IMR-90 (cell line): ENCODE measurements at regions of chr4 and their contacts with region 1.

Region 1: DNA sequence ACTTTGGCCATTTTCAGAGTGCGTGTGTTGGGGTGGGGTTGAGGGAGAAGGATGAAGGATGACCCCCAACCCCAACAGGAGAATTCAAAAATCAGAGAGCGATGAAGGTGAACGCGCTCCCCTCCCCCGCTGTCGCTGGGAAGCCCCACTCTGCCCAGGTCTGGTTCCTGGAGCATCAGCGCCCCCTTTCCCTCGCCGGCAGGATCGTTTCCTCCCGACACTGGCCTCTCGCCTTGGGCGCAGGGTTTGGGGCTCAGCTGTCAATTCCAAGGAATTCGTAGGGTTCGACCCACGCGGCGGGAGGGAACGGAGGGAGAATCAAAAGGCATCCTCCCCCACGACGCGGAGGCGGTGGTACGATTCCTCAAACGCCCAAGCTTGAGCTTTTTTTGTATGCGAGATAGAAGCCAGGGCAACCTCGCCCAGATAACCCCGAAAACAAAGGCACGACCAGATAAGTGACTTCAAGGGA is 1.0 kb upstream of the PDGFRA start:
- DNase-seq: peak; percentile 82
- ATAC-seq: peak; percentile 48
- H3K4me3 ChIP-seq: peak overlapping the region; percentile 89
- H3K27ac ChIP-seq: peak overlapping the region; percentile 83
- H3K4me1 ChIP-seq: peaks cover 15% of the 10 kb centered on the region
- H3K27me3 ChIP-seq: no peaks in the 10 kb centered on the region
- CTCF ChIP-seq: peak; percentile 95
- POLR2A ChIP-seq: peak; percentile 26; the same call in 1 of the 2 replicates
- RAD21 ChIP-seq: peak; percentile 97

Region 2: DNA sequence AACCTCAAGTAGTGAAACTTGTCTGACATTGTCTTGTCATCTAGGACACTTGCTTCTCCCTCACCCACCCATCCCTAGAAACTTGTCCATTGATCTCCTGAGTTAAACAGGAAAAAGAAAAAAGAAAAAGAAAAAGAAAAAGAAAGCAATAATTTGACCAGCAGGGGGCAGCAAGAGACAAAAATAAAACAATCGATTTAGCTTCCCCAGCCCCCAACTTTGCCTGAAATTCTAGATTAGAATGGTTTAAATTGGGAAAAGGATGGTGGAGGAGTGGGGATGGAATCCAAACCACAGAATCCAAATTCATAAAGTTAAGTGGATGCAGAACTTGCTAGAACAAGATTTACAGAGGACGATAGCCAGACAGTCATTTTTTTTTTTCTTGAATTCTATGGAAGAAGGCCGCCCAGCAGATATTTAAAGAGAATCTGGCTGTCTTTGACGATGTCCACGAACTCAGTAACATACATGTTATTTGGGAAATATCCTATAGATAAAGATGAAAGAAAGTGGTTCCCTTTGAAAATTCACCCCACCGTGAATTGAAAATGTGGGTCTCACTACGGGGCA is 1851.9 kb before region 1 on chr4:
- CTCF ChIA-PET with region 1: no interaction called
- POLR2A ChIA-PET with region 1: no interaction called
- dilution Hi-C with region 1: no loop called
- in situ Hi-C with region 1: loop called (anchors 10 kb)
- intact Hi-C with region 1: no loop called
- DNase-seq: peak; percentile 47
- ATAC-seq: peak; percentile 48
- H3K4me3 ChIP-seq: no peak overlapping the region
- H3K27ac ChIP-seq: no peak overlapping the region
- H3K4me1 ChIP-seq: no peaks in the 10 kb centered on the region
- H3K27me3 ChIP-seq: peaks cover 9% of the 10 kb centered on the region
- CTCF ChIP-seq: peak; percentile 66
- POLR2A ChIP-seq: no peak
- RAD21 ChIP-seq: peak; percentile 69

Region 3: GRCh38 chr4:53196882-53197771 is 1031.0 kb before region 1 on chr4:
- CTCF ChIA-PET with region 1: no interaction called
- POLR2A ChIA-PET with region 1: no interaction called
- dilution Hi-C with region 1: no loop called
- in situ Hi-C with region 1: no loop called
- intact Hi-C with region 1: loop called (anchors 1 kb)
- DNase-seq: peak; percentile 90
- ATAC-seq: peak; percentile 82
- H3K4me3 ChIP-seq: peak overlapping the region; percentile 22; the same call in 1 of the 2 replicates
- H3K27ac ChIP-seq: peak overlapping the region; percentile 56; the same call in 1 of the 2 replicates
- H3K4me1 ChIP-seq: no peaks in the 10 kb centered on the region
- H3K27me3 ChIP-seq: no peaks in the 10 kb centered on the region
- CTCF ChIP-seq: peak; percentile 80
- POLR2A ChIP-seq: no peak
- RAD21 ChIP-seq: peak; percentile 85

Region 4: DNA sequence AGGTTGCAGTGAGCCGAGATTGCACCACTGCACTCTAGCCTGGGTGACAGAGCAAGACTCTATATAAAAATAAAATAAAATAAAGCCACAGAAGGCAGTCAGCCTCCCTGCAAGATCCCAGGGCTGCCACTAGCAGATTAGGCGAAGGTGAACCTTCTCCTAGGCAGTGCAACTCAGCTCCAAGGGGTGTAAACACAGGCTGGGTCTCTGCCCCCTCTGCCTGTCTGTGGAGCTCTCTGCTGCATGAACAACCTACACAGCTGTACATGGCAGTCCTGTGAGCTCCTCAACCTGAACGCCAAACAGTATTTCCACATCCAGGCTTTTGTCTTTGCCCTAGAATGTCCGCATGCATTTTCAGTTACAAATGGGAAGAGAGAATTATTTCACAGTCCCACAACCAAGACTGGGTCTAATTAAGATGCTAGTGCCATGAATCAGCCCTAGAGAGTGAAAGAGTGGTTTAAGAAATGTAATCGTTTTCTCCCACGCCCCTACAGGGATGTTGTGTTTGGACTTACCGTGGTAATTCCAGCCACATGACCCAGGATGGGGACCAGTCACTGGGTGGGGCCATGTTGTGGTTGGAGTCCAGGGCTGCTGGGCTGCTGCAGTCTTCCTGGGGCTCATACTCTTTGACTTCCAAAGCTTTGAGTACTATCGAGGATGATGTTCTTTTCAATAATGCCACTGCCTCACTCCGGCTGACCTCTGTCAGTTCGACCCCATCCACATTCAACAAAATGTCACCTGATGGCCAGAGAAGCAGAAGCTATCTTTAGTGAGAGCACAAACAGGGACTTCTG is 751.7 kb before region 1 on chr4:
- CTCF ChIA-PET with region 1: no interaction called
- POLR2A ChIA-PET with region 1: no interaction called
- dilution Hi-C with region 1: no loop called
- in situ Hi-C with region 1: no loop called
- intact Hi-C with region 1: loop called (anchors 5 kb)
- DNase-seq: peak; percentile 98
- ATAC-seq: peak; percentile 87
- H3K4me3 ChIP-seq: no peak overlapping the region
- H3K27ac ChIP-seq: peak overlapping the region; percentile 93
- H3K4me1 ChIP-seq: peaks cover 20% of the 10 kb centered on the region
- H3K27me3 ChIP-seq: no peaks in the 10 kb centered on the region
- CTCF ChIP-seq: no peak
- POLR2A ChIP-seq: no peak
- RAD21 ChIP-seq: no peak

Region 5: GRCh38 chr4:53702334-53703266 is 525.5 kb before region 1 on chr4:
- CTCF ChIA-PET with region 1: interaction called, 3 read pairs
- POLR2A ChIA-PET with region 1: interaction called, 4 read pairs
- dilution Hi-C with region 1: no loop called
- in situ Hi-C with region 1: loop called (anchors 5 kb)
- intact Hi-C with region 1: loop called (anchors 1 kb)
- DNase-seq: peak; percentile 77
- ATAC-seq: peak; percentile 83
- H3K4me3 ChIP-seq: no peak overlapping the region
- H3K27ac ChIP-seq: peak overlapping the region; percentile 86
- H3K4me1 ChIP-seq: peaks cover 22% of the 10 kb centered on the region
- H3K27me3 ChIP-seq: no peaks in the 10 kb centered on the region
- CTCF ChIP-seq: 0 out of 2 replicates have a peak, but pooled peaks have one; percentile 10
- POLR2A ChIP-seq: no peak
- RAD21 ChIP-seq: peak; percentile 4; the same call in 1 of the 2 replicates

Region 6: GRCh38 chr4:53908661-53909078 is 319.4 kb before region 1 on chr4:
- CTCF ChIA-PET with region 1: interaction called, 13 read pairs
- POLR2A ChIA-PET with region 1: interaction called, 8 read pairs
- dilution Hi-C with region 1: no loop called
- in situ Hi-C with region 1: loop called (anchors 5 kb)
- intact Hi-C with region 1: loop called (anchors 1 kb)
- DNase-seq: peak; percentile 97
- ATAC-seq: peak; percentile 70
- H3K4me3 ChIP-seq: peak overlapping the region; percentile 22; the same call in 1 of the 2 replicates
- H3K27ac ChIP-seq: peak overlapping the region; percentile 96
- H3K4me1 ChIP-seq: peaks cover 11% of the 10 kb centered on the region
- H3K27me3 ChIP-seq: no peaks in the 10 kb centered on the region
- CTCF ChIP-seq: peak; percentile 95
- POLR2A ChIP-seq: peak; percentile 48; the same call in 1 of the 2 replicates
- RAD21 ChIP-seq: peak; percentile 93

Region 7: GRCh38 chr4:54041100-54041499 is 187.0 kb before region 1 on chr4:
- CTCF ChIA-PET with region 1: no interaction called
- POLR2A ChIA-PET with region 1: no interaction called
- dilution Hi-C with region 1: no loop called
- in situ Hi-C with region 1: no loop called
- intact Hi-C with region 1: no loop called
- DNase-seq: no peak
- ATAC-seq: no peak
- H3K4me3 ChIP-seq: no peak overlapping the region
- H3K27ac ChIP-seq: no peak overlapping the region
- H3K4me1 ChIP-seq: 0 out of 2 replicates have a peak, but pooled peaks cover 2% of the 10 kb centered on the region
- H3K27me3 ChIP-seq: no peaks in the 10 kb centered on the region
- CTCF ChIP-seq: no peak
- POLR2A ChIP-seq: no peak
- RAD21 ChIP-seq: no peak

Region 8: DNA sequence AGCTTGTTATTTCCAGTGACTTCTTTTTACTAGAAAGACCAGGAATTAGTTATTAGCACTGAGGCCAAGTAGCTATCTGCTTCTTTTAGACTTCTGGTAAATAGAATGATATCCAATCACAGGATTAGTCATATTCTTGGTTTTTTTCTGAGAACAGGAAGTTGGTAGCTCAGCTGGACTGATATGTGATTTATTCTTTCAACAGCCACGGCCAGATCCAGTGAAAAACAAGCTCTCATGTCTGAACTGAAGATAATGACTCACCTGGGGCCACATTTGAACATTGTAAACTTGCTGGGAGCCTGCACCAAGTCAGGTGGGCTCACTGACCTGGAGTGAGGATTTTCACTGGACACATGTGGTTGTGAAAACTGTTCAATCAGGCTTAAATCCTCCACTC is 49.6 kb after region 1 on chr4:
- CTCF ChIA-PET with region 1: no interaction called
- POLR2A ChIA-PET with region 1: no interaction called
- dilution Hi-C with region 1: no loop called
- in situ Hi-C with region 1: no loop called
- intact Hi-C with region 1: no loop called
- DNase-seq: peak; percentile 92
- ATAC-seq: peak; percentile 25
- H3K4me3 ChIP-seq: no peak overlapping the region
- H3K27ac ChIP-seq: peak overlapping the region; percentile 60
- H3K4me1 ChIP-seq: peaks cover 17% of the 10 kb centered on the region
- H3K27me3 ChIP-seq: no peaks in the 10 kb centered on the region
- CTCF ChIP-seq: no peak
- POLR2A ChIP-seq: no peak
- RAD21 ChIP-seq: no peak; the same call in 1 of the 2 replicates